Activated CD4-positive, alpha-beta memory T cell treated with anti-CD3 and anti-CD28 coated beads for 36 hours (primary cell): ENCODE measurements at regions of chr2 and their contacts with region 1.

Region 1: GRCh38 chr2:201071479-201072200 is at the starts of genes HYCC2 and NDUFB3:
- DNase-seq: peak; percentile 95
- H3K4me3 Mint-ChIP-seq: peak within 1 kb of the TSS; percentile 91
- H3K27ac Mint-ChIP-seq: peak within 1 kb of the TSS; percentile 86
- H3K4me1 Mint-ChIP-seq: peaks cover 52% of the 10 kb centered on the region
- H3K27me3 Mint-ChIP-seq: no peaks in the 10 kb centered on the region
- total RNA-seq, gene HYCC2: 18.9 to 20.5 TPM
- total RNA-seq, gene NDUFB3: 158 to 162 TPM

Region 2: DNA sequence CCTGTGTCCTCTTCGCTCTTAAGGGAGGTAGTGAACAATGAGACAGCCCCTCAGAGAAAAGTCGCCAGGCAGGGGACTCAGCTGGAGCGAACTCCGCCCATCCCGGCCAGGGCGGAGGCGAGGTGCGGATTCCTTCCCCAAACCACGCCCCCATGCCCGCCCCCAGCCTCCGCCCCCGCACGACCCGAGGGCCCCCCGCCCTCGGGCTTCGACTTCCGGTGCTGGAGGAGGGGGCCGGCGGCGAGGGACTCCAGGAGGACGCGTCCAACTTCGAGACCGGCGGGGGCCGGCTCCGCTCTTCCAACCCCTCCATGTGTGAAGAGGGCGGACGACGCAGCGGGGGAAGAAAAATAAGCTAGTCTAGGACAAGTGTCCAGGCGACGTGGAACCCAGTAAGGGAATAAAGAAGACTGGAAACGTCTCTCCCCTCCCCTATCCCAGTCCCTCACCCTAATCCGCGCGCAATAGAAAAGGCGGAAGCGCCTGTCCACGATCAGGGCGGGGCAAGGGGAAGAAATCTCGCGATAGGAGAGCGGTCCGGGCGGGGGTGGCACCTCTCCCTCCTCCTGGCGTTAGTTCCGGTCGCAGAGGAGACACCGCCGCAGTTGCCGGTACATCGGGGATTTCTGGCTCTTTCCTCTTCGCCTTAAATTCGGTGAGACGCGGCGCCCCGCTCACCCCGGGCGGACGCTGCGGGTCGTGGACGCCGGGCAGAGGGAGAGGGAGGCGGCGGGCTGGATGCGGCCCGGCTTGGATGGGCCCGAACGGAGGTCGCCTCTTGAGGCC is 260.1 kb before region 1 on chr2 and contains the start of gene BZW1:
- CTCF ChIA-PET with region 1: interaction called, 3 read pairs
- POLR2A ChIA-PET with region 1: no interaction called
- intact Hi-C with region 1: loop called (anchors 1 kb)
- DNase-seq: peak; percentile 98
- H3K4me3 Mint-ChIP-seq: peak within 1 kb of the TSS; percentile 100
- H3K27ac Mint-ChIP-seq: peak within 1 kb of the TSS; percentile 100
- H3K4me1 Mint-ChIP-seq: peaks cover 44% of the 10 kb centered on the region
- H3K27me3 Mint-ChIP-seq: peaks cover 1% of the 10 kb centered on the region
- total RNA-seq, gene BZW1: 416 to 423 TPM

Region 3: GRCh38 chr2:200888704-200889625 is 182.7 kb before region 1 on chr2 and contains the starts of genes NIF3L1 and PPIL3:
- CTCF ChIA-PET with region 1: interaction called, 9 read pairs
- POLR2A ChIA-PET with region 1: interaction called, 4 read pairs
- intact Hi-C with region 1: loop called (anchors 1 kb)
- DNase-seq: peak; percentile 99
- H3K4me3 Mint-ChIP-seq: peak within 1 kb of the TSS; percentile 98
- H3K27ac Mint-ChIP-seq: peak within 1 kb of the TSS; percentile 100
- H3K4me1 Mint-ChIP-seq: peaks cover 44% of the 10 kb centered on the region
- H3K27me3 Mint-ChIP-seq: no peaks in the 10 kb centered on the region
- total RNA-seq, gene NIF3L1: 30.8 to 32.7 TPM
- total RNA-seq, gene PPIL3: 84.0 to 87.9 TPM

Region 4: GRCh38 chr2:200944467-200945394 is 126.9 kb before region 1 on chr2:
- CTCF ChIA-PET with region 1: interaction called, 18 read pairs
- POLR2A ChIA-PET with region 1: no interaction called
- intact Hi-C with region 1: no loop called
- DNase-seq: peak; percentile 88
- H3K4me3 Mint-ChIP-seq: no peak overlapping the region
- H3K27ac Mint-ChIP-seq: peak overlapping the region; percentile 79
- H3K4me1 Mint-ChIP-seq: peaks cover 30% of the 10 kb centered on the region
- H3K27me3 Mint-ChIP-seq: no peaks in the 10 kb centered on the region

Region 5: GRCh38 chr2:201057087-201057521 is 14.5 kb before region 1 on chr2:
- CTCF ChIA-PET with region 1: interaction called, 11 read pairs
- POLR2A ChIA-PET with region 1: no interaction called
- intact Hi-C with region 1: no loop called
- DNase-seq: no peak
- H3K4me3 Mint-ChIP-seq: no peak overlapping the region
- H3K27ac Mint-ChIP-seq: no peak overlapping the region
- H3K4me1 Mint-ChIP-seq: peaks cover 32% of the 10 kb centered on the region
- H3K27me3 Mint-ChIP-seq: no peaks in the 10 kb centered on the region

Region 6: DNA sequence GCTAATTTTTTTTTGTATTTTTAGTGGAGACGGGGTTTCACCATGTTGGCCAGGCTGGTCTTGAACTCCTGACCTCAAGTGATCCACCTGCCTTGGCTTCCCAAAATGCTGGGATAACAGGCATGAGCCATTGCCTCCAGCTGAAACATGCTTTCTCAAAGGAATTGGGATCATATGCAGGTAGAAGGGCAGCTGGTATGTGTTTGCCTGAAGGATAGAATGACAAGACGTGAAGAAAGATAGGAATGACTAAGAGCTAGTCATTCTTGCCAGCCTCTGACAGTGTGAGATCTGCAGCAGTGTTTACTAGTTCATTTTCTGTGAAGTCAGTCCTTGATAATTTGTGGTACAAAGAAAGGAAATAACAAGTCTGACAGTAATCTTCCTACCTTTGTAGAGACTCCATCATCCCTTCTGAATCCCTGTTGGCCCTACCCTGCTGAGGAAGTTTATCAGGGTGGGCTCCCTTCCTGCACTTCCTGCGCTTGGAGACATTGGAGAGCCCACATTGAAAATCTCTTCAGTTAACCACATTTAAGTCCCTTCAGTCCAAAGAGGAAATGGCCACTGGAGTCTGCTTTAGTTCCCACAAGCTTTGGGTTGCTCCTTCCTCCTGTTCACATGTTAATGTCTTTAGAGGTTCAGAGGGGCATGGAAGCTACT is 59.0 kb after region 1 on chr2:
- CTCF ChIA-PET with region 1: interaction called, 4 read pairs
- POLR2A ChIA-PET with region 1: interaction called, 9 read pairs
- intact Hi-C with region 1: loop called (anchors 1 kb)
- DNase-seq: peak; percentile 55
- H3K4me3 Mint-ChIP-seq: peak overlapping the region; percentile 92
- H3K27ac Mint-ChIP-seq: peak overlapping the region; percentile 94
- H3K4me1 Mint-ChIP-seq: peaks cover 54% of the 10 kb centered on the region
- H3K27me3 Mint-ChIP-seq: no peaks in the 10 kb centered on the region

Region 7: DNA sequence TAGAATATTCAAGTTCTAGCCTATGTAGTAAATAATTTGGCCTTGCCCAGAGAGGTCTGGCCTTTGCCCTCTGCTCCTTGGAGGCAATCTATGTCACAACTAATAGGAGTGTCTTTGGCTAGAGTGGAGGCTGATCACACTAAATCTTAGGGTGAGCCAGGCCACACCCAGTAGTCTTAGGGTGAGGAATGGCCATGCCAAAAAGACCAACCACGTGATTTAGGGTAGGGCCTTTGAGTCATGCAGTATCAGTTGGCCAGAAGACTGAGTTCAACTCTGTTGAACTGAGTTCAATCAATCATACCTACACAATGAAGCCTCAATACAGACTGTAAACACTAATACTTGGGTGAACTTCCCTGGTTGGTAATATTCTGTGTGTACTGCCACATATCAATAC is 311.5 kb after region 1 on chr2:
- CTCF ChIA-PET with region 1: no interaction called
- POLR2A ChIA-PET with region 1: no interaction called
- intact Hi-C with region 1: no loop called
- DNase-seq: no peak
- H3K4me3 Mint-ChIP-seq: no peak overlapping the region
- H3K27ac Mint-ChIP-seq: no peak overlapping the region
- H3K4me1 Mint-ChIP-seq: no peaks in the 10 kb centered on the region
- H3K27me3 Mint-ChIP-seq: no peaks in the 10 kb centered on the region